GM12878 (cell line): ENCODE measurements at regions of chr3 and their contacts with region 1.

Region 1: DNA sequence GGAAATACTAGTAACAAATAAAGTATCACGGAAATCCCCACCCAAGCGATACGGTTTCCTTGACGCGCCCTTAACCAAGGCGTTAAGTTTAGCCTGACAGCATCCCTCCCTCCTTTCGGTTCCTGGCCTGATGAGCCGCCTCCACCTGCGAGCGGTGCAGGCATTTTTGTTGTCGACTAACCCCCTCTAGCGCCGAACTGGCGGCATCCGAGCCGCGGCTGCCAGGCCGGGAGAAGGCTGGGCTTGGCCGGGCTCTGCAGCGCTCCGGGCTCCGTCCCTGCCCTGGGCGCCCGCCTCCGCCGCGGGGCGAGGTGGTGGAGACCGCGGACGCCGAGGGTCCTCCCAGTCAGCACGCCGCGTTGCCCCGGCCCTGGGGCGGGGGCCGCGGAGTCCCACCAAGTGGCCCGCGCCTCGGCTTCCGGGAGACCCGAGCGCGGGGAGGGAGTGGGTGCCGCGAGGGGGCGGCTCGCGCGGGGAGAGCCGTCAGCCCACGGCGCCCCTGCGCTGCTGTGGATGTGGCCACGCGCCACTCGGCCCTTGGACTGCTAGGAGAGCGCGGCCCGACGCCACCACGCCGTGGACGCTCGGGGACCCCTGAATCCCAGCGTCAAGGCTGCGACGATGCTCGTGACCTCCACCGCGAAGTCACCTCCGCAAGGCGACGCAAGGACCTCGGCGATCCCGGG is 1.1 kb upstream of the EPHA6 start:
- DNase-seq: peak; percentile 13
- ATAC-seq: peak; percentile 100
- H3K4me3 ChIP-seq: peak overlapping the region; percentile 36; the same call in 1 of the 2 replicates
- H3K27ac ChIP-seq: no peak overlapping the region
- H3K4me1 ChIP-seq: peaks cover 10% of the 10 kb centered on the region
- H3K27me3 ChIP-seq: peaks cover 0 to 2% of the 10 kb centered on the region in 2 experiments; a peak in 3 of 4 replicates
- CTCF ChIP-seq: peak; percentile 61 to 83 (median 66)
- EP300 ChIP-seq: no peak; a peak in 1 of 4 replicates
- POLR2A ChIP-seq: no peak
- RAD21 ChIP-seq: peak; percentile 70

Region 2: DNA sequence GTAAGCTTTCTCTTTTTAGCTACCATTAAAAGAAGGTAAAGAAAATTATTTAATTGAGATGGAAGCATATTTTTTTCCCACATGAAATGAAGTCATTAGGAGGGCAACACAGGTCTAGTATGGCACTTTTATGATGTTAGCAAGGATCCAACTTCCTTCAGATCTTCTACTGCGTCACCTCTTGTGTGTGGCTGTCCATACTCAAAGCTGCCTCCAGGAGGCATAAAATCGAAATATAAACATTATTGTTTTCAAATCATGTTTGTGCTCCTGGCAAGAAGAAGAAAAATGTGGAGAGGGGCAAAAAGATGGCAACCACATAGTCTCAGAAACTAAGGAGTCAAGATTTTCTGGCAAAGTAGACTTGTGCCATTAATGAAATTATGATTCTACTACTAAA is 790.6 kb before region 1 on chr3:
- CTCF ChIA-PET with region 1: no interaction called
- POLR2A ChIA-PET with region 1: no interaction called
- RAD21 ChIA-PET with region 1: no interaction called
- SMC1A ChIA-PET with region 1: no interaction called
- in situ Hi-C with region 1: no loop called
- intact Hi-C with region 1: loop called (anchors 10 kb)
- DNase-seq: no peak
- ATAC-seq: peak; percentile 36; the same call in 1 of the 3 replicates
- H3K4me3 ChIP-seq: no peak overlapping the region
- H3K27ac ChIP-seq: no peak overlapping the region
- H3K4me1 ChIP-seq: no peaks in the 10 kb centered on the region
- H3K27me3 ChIP-seq: no peaks in the 10 kb centered on the region
- CTCF ChIP-seq: peak in 1 of 3 experiments; percentile 8; a peak in 1 of 6 replicates
- EP300 ChIP-seq: no peak
- POLR2A ChIP-seq: no peak
- RAD21 ChIP-seq: no peak

Region 3: DNA sequence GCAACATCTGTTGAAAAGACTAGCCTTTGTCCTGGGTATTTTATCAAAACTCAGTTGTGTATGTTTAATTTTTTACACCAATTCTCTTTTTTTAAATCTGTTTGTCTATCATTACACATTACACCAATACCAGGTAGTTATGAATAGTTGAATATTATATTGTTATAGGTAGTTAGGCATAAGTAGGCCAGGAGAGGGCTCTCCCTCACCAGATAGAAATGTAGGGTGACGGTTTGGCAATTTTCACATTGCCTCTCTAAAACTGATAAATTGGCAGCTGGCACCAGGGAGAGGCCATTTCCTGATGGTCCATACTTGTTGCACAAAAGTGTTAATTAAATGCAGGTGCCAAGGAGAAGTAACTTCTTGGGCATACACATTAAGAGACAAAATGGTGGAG is 481.9 kb before region 1 on chr3:
- CTCF ChIA-PET with region 1: interaction called, 3 read pairs
- POLR2A ChIA-PET with region 1: no interaction called
- RAD21 ChIA-PET with region 1: no interaction called
- SMC1A ChIA-PET with region 1: no interaction called
- in situ Hi-C with region 1: no loop called
- intact Hi-C with region 1: loop called (anchors 2 kb)
- DNase-seq: no peak
- ATAC-seq: peak; percentile 79
- H3K4me3 ChIP-seq: no peak overlapping the region
- H3K27ac ChIP-seq: no peak overlapping the region
- H3K4me1 ChIP-seq: no peaks in the 10 kb centered on the region
- H3K27me3 ChIP-seq: no peaks in the 10 kb centered on the region
- CTCF ChIP-seq: peak in 1 of 3 experiments; percentile 34; a peak in 2 of 6 replicates
- EP300 ChIP-seq: no peak
- POLR2A ChIP-seq: no peak
- RAD21 ChIP-seq: peak; percentile 28; the same call in 1 of the 2 replicates